Tibial artery (tissue), 4 donors: ENCODE measurements at regions of chr11 and their contacts with region 1.

Region 1: GRCh38 chr11:69088676-69089146 is 40.0 kb downstream of the TPCN2 start:
- DNase-seq: peak; percentile 66 to 84
- H3K4me3 ChIP-seq: no peak overlapping the region
- H3K27ac ChIP-seq: peak overlapping the region in 1 of 2 donors; percentile 45
- H3K4me1 ChIP-seq: peaks cover 0 to 8% (median 3%) of the 10 kb centered on the region in 4 donors
- H3K27me3 ChIP-seq: no peaks in the 10 kb centered on the region
- CTCF ChIP-seq: peak; percentile 73 to 76

Region 2: GRCh38 chr11:68903288-68904247 is 185.1 kb before region 1 on chr11 and contains the starts of genes IGHMBP2 and MRPL21:
- intact Hi-C with region 1: loop called (anchors 10 kb)
- DNase-seq: peak; percentile 75 to 88
- H3K4me3 ChIP-seq: peak within 1 kb of the TSS; percentile 64 to 88
- H3K27ac ChIP-seq: peak within 1 kb of the TSS; percentile 79 to 89
- H3K4me1 ChIP-seq: peaks cover 0 to 37% (median 27%) of the 10 kb centered on the region in 4 donors
- H3K27me3 ChIP-seq: no peaks in the 10 kb centered on the region
- CTCF ChIP-seq: no peak

Region 3: GRCh38 chr11:68946465-68947036 is 142.2 kb before region 1 on chr11:
- intact Hi-C with region 1: no loop called
- DNase-seq: peak in 1 of 2 donors; percentile 37
- H3K4me3 ChIP-seq: no peak overlapping the region
- H3K27ac ChIP-seq: peak overlapping the region; percentile 83 to 89
- H3K4me1 ChIP-seq: peaks cover 0 to 55% (median 32%) of the 10 kb centered on the region in 4 donors
- H3K27me3 ChIP-seq: no peaks in the 10 kb centered on the region
- CTCF ChIP-seq: no peak

Region 4: GRCh38 chr11:69010964-69011623 is 77.6 kb before region 1 on chr11:
- intact Hi-C with region 1: loop called (anchors 5 kb)
- DNase-seq: peak; percentile 78 to 93
- H3K4me3 ChIP-seq: peak overlapping the region; percentile 70 to 81
- H3K27ac ChIP-seq: peak overlapping the region; percentile 91 to 93
- H3K4me1 ChIP-seq: peaks cover 13 to 74% (median 60%) of the 10 kb centered on the region in 4 donors
- H3K27me3 ChIP-seq: no peaks in the 10 kb centered on the region
- CTCF ChIP-seq: no peak

Region 5: GRCh38 chr11:69296890-69297786 is 208.4 kb after region 1 on chr11:
- intact Hi-C with region 1: no loop called
- DNase-seq: peak; percentile 95 to 96
- H3K4me3 ChIP-seq: peak overlapping the region; percentile 24 to 28
- H3K27ac ChIP-seq: peak overlapping the region; percentile 34 to 63
- H3K4me1 ChIP-seq: peaks cover 10 to 55% (median 46%) of the 10 kb centered on the region in 4 donors
- H3K27me3 ChIP-seq: no peaks in the 10 kb centered on the region
- CTCF ChIP-seq: no peak